ENCODE measurements at regions of chr3 and their contacts with region 1.

Region 1: GRCh38 chr3:132535575-132536441 is 61.3 kb upstream of the ACKR4 start:
- DNase-seq: peak; percentile 56
- H3K4me3 ChIP-seq: no peak overlapping the region
- CTCF ChIP-seq: peak; percentile 41

Region 2: DNA sequence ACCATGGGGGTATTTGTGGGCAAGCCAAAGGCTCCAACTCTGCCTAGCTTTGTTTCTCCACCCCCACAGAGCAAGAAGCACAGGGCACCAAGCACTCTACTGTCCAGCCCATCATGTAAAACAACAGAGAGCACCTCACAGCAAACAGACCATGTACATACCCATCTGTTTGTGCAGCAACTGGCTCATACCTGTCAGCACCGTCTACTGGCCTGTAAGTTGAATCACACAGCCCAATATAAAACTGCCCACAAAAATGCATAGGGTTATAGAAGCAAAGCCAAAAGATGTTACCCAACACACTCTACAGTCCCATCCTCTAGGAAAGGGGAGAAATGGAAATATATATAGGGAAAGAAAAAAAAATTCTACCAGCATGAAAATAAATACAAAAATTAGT is 361.3 kb before region 1 on chr3:
- CTCF ChIA-PET with region 1: no interaction called
- POLR2A ChIA-PET with region 1: no interaction called
- DNase-seq: no peak
- H3K4me3 ChIP-seq: no peak overlapping the region
- CTCF ChIP-seq: no peak

Region 3: DNA sequence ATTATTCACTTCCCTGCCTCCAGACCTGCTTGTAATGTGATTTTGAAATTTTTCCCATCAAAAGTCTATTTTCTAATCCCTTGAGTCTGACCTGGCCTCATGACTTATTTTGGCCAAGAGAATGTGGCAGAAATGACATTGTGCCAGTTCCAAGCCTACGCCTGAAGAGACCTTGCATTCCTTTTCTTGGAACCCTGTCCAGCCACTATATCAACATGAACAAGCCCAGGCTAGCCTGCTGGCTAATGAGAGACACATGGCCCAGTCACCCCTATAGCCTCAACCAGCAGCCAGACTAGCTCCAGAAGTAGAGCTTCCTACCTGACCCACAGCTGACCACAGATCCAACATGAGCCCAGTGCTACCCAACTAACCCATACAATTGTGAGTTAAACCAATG is 339.7 kb before region 1 on chr3:
- CTCF ChIA-PET with region 1: no interaction called
- POLR2A ChIA-PET with region 1: no interaction called
- DNase-seq: no peak
- H3K4me3 ChIP-seq: no peak overlapping the region
- CTCF ChIP-seq: no peak

Region 4: DNA sequence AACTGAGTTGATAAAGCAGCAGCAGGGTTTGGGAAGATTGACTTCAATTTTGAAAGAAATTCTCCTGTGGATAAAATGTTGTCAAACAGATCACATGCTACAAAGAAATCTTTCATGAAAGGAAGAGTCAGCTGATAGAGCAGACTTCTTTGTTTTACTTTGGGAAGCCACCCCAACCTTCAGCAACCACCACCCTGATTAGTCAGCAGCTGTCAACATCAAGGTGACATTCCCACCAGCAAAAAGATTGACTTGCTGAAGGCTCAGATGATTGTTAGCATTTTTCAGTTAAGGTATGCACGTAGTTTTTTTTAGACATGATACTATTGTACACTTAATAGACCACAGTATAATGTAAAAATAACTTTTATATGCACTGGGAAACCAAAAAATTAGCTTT is 26.3 kb before region 1 on chr3:
- CTCF ChIA-PET with region 1: interaction called, 13 read pairs
- POLR2A ChIA-PET with region 1: no interaction called
- DNase-seq: no peak
- H3K4me3 ChIP-seq: no peak overlapping the region
- CTCF ChIP-seq: no peak

Region 5: GRCh38 chr3:132549890-132550578 is 14.2 kb after region 1 on chr3:
- CTCF ChIA-PET with region 1: interaction called, 18 read pairs
- POLR2A ChIA-PET with region 1: no interaction called
- DNase-seq: no peak
- H3K4me3 ChIP-seq: no peak overlapping the region
- CTCF ChIP-seq: no peak

Region 6: DNA sequence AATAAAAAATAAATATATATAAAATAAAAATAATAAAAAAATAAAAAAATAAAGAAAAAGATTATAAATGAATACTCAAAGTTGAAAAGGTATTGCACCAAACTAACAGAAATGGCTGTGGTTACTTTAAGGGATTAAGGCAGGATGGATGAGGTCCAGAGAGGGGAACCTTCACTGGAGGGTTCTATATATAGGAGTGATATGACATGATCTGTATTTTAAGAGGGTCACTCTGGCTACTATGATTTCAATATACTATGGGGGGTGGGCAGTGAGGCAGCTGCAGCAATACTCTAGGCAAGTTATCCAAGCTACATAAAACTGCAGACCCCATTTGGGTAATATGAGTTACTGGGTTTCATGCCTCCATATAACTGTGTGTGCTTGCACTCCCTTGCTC is 99.2 kb after region 1 on chr3:
- CTCF ChIA-PET with region 1: interaction called, 524 read pairs
- POLR2A ChIA-PET with region 1: no interaction called
- DNase-seq: no peak
- H3K4me3 ChIP-seq: no peak overlapping the region
- CTCF ChIP-seq: no peak

Region 7: GRCh38 chr3:132652640-132653270 is 116.9 kb after region 1 on chr3:
- CTCF ChIA-PET with region 1: interaction called, 74 read pairs
- POLR2A ChIA-PET with region 1: no interaction called
- DNase-seq: no peak
- H3K4me3 ChIP-seq: no peak overlapping the region
- CTCF ChIP-seq: no peak

Region 8: GRCh38 chr3:132682201-132682600 is 146.4 kb after region 1 on chr3:
- CTCF ChIA-PET with region 1: interaction called, 10 read pairs
- POLR2A ChIA-PET with region 1: no interaction called
- DNase-seq: no peak
- H3K4me3 ChIP-seq: no peak overlapping the region
- CTCF ChIP-seq: no peak